ENCODE measurements at regions of chr12 and their contacts with region 1.

Region 1: DNA sequence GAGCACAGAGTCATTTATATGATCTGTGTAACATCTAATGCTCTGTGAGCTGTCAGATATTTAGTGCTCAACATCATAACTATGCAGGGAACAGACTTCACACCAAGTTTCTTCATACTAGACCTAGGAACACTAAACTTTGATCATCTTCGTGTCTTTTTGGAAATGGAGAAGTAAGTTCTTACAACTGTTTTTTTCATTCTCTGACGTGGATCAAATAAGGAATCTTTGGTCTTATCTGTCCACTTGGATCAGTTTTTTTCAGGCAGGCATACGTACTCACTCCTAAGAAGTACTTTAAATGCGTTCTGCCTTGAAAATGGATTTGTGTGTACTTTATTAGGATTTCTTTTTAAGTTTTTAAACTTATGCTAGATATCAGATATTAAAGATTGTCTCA is 191.0 kb downstream of the FBXL14 start:
- DNase-seq: no peak
- ATAC-seq: no peak

Region 2: DNA sequence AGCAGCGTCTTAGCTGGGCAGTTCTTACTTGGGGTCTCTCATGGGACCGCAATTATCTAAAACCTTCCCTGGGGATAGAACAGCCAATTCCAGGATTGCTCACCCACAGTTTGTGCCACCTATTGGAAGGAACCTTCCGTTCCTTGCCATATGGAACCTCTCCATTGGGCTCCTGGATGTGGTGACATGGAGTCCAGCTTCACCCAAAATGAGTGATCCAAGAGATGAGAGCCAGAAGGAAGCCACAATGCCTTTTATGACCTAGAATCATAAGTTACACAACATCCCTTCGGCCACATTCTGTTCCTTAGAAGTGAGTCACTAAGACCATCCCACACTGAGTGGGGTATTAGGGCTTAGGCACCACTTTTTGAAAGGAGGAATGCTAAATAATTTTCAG is 26.6 kb after region 1 on chr12:
- intact Hi-C with region 1: no loop called
- DNase-seq: no peak
- ATAC-seq: peak; percentile 95

Region 3: GRCh38 chr12:1474041-1474573 is 70.7 kb after region 1 on chr12:
- intact Hi-C with region 1: loop called (anchors 10 kb)
- DNase-seq: no peak
- ATAC-seq: no peak

Measured in Right ventricle myocardium inferior (tissue), 1 donor.